Mammary epithelial cell (primary cell): ENCODE measurements at regions of chr1 and their contacts with region 1.

Region 1: GRCh38 chr1:207052911-207053769 is at the start of gene PFKFB2:
- DNase-seq: peak; percentile 99
- H3K4me3 ChIP-seq: peak within 1 kb of the TSS; percentile 77 to 91 (median 80)
- H3K27ac ChIP-seq: peak within 1 kb of the TSS; percentile 95
- H3K4me1 ChIP-seq: peaks cover 34% of the 10 kb centered on the region
- H3K27me3 ChIP-seq: no peaks in the 10 kb centered on the region
- CTCF ChIP-seq: peak in 1 of 2 donors; percentile 29
- total RNA-seq, gene PFKFB2: 34.4 to 38.7 TPM

Region 2: GRCh38 chr1:207017615-207018559 is 35.3 kb before region 1 on chr1:
- CTCF ChIA-PET with region 1: no interaction called
- dilution Hi-C with region 1: no loop called
- in situ Hi-C with region 1: no loop called
- intact Hi-C with region 1: loop called (anchors 1 kb)
- DNase-seq: peak; percentile 78
- H3K4me3 ChIP-seq: no peak overlapping the region
- H3K27ac ChIP-seq: peak overlapping the region; percentile 100
- H3K4me1 ChIP-seq: peaks cover 59% of the 10 kb centered on the region
- H3K27me3 ChIP-seq: no peaks in the 10 kb centered on the region
- CTCF ChIP-seq: no peak

Region 3: DNA sequence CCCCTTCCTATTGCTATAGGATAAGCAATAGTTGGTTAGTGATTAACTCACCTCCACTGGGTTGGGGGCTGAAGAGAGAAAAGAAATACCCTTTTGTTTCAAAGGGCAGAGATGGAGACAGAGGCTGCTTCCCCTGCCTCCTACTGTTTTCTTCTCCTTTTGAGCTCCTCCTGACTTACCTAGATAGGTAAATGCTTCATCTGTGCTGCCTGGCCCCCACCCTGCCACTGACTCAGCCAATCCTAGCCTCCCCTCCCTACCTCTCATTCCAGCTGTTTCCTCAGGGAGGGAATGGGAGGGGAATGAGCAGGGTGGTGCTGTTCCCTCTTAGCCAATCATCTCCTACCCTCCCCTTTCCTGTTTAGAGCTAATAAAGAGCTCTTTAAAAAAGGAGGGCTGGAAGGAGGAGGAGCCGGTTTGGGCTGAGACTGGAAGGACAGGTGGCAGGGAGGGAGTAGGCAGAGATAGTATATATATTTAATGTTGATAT is 20.6 kb before region 1 on chr1 and contains the start of gene C1orf116:
- CTCF ChIA-PET with region 1: interaction called, 4 read pairs
- dilution Hi-C with region 1: no loop called
- in situ Hi-C with region 1: no loop called
- intact Hi-C with region 1: loop called (anchors 1 kb)
- DNase-seq: peak; percentile 99
- H3K4me3 ChIP-seq: peak within 1 kb of the TSS; percentile 46 to 78 (median 72)
- H3K27ac ChIP-seq: peak within 1 kb of the TSS; percentile 100
- H3K4me1 ChIP-seq: peaks cover 57% of the 10 kb centered on the region
- H3K27me3 ChIP-seq: no peaks in the 10 kb centered on the region
- CTCF ChIP-seq: no peak
- total RNA-seq, gene C1orf116: 94.0 to 129 TPM

Region 4: DNA sequence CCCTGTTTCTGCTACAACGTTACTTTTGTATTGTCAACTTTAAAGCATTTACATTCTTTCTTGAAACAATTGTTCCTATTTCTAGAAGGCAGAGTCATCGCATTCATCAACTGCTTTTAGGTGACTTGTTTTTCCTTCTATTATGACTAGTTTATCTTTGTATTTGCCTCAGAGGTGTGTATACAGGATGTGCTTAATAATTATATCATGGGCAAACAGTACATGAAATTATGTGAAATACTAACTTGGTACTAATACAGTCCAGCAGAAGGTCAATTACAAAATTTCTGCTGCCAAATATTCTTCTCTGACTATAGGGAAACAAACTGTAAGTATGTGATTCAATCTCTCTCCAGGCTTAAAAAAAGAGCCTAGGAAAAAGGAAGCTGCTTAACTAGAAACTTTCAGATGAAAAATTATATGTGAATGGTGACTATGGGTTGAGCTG is 152.5 kb after region 1 on chr1:
- CTCF ChIA-PET with region 1: no interaction called
- dilution Hi-C with region 1: no loop called
- in situ Hi-C with region 1: no loop called
- intact Hi-C with region 1: no loop called
- DNase-seq: no peak
- H3K4me3 ChIP-seq: no peak overlapping the region
- H3K27ac ChIP-seq: no peak overlapping the region
- H3K4me1 ChIP-seq: no peaks in the 10 kb centered on the region
- H3K27me3 ChIP-seq: no peaks in the 10 kb centered on the region
- CTCF ChIP-seq: no peak